CD8-positive, alpha-beta memory T cell (primary cell): ENCODE measurements at regions of chr1 and their contacts with region 1.

Region 1: DNA sequence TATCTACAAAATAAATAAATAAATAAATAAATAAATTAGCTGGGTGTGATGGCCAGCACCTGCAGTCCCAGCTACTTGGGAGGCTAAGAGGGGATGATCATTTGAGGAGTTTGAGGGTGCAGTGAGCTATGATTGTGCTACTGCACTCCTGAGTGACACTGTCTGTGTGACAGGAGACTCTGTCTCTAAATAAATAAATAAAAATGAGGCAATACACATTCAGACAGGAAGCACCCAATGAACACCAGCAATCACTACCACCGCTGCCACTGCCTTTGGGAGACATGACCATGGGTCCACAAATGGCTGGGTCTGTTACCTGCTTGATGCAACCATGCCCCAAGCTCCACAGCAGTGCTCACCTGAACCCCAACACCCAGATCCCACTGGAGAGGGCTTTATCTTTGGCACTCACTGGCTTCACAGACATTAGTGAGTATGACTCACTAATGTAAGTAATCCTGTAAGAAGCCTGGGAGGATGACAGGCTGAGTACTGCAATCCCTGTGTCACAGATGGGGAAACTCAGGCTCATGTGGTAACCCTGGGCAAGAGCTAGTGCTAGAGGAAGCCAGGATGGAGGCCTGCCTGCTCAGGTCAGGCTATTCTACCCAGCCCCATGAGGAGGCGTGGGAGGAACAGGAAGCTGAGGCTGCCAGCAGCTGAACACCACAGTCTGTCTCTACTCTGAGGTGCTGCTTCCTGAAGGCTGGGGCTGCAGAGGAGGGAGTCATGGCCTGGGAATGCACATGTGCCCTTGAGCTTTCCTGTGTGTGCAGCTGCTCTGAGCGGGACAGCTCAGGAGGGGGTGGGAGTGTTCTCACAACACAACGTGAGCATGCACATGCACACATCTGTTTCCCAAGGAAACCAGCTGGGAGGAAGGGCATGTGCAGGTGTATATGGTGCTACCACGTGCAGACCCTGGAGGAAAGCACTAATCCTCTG is 43.0 kb downstream of the SLC9A1 start:
- DNase-seq: peak; percentile 46 to 80 (median 59)
- H3K4me3 ChIP-seq: peak overlapping the region; percentile 39
- H3K4me3 Mint-ChIP-seq: peak overlapping the region in 5 of 7 donors; percentile 49 to 76 (median 62)
- H3K27ac ChIP-seq: peak overlapping the region; percentile 35
- H3K27ac Mint-ChIP-seq: peak overlapping the region; percentile 55 to 95 (median 88)
- H3K4me1 ChIP-seq: peaks cover 44% of the 10 kb centered on the region
- H3K4me1 Mint-ChIP-seq: peaks cover 40 to 66% (median 56%) of the 10 kb centered on the region in 3 donors
- H3K27me3 ChIP-seq: no peaks in the 10 kb centered on the region
- H3K27me3 Mint-ChIP-seq: no peaks in the 10 kb centered on the region

Region 2: GRCh38 chr1:27044613-27045151 is 67.2 kb before region 1 on chr1:
- CTCF ChIA-PET with region 1: interaction called, 26 read pairs
- POLR2A ChIA-PET with region 1: no interaction called
- DNase-seq: peak; percentile 72 to 88 (median 84)
- H3K4me3 ChIP-seq: peak overlapping the region; percentile 41
- H3K4me3 Mint-ChIP-seq: peak overlapping the region in 6 of 7 donors; percentile 23 to 75 (median 60)
- H3K27ac ChIP-seq: no peak overlapping the region
- H3K27ac Mint-ChIP-seq: peak overlapping the region in 3 of 8 donors; percentile 5 to 60 (median 13)
- H3K4me1 ChIP-seq: peaks cover 13% of the 10 kb centered on the region
- H3K4me1 Mint-ChIP-seq: peaks cover 17 to 20% (median 19%) of the 10 kb centered on the region in 3 donors
- H3K27me3 ChIP-seq: no peaks in the 10 kb centered on the region
- H3K27me3 Mint-ChIP-seq: peaks cover 2 to 4% of the 10 kb centered on the region in 2 donors

Region 3: DNA sequence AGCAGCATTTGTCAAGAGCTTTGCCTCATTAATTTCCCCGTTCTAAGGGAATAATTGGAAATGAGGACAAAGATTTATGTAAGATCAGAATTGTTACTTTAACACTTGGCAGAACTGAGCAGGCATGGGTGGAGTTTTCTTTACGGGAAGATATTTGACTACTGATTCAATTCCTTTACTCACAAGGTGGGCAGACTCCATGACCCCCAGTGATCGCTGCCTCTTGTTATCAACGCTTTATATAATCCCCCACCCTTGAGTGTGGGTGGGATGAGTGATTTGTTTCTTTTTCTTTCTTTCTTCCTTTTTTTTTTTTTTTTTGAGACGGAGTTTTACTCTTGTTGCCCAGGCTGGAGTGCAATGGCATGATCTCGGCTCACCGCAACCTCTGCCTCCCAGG is 33.9 kb before region 1 on chr1:
- CTCF ChIA-PET with region 1: no interaction called
- POLR2A ChIA-PET with region 1: no interaction called
- DNase-seq: no peak
- H3K4me3 ChIP-seq: no peak overlapping the region
- H3K4me3 Mint-ChIP-seq: no peak overlapping the region
- H3K27ac ChIP-seq: no peak overlapping the region
- H3K27ac Mint-ChIP-seq: no peak overlapping the region
- H3K4me1 ChIP-seq: no peaks in the 10 kb centered on the region
- H3K4me1 Mint-ChIP-seq: no peaks in the 10 kb centered on the region
- H3K27me3 ChIP-seq: no peaks in the 10 kb centered on the region
- H3K27me3 Mint-ChIP-seq: peaks cover 1 to 3% of the 10 kb centered on the region in 2 donors

Region 4: DNA sequence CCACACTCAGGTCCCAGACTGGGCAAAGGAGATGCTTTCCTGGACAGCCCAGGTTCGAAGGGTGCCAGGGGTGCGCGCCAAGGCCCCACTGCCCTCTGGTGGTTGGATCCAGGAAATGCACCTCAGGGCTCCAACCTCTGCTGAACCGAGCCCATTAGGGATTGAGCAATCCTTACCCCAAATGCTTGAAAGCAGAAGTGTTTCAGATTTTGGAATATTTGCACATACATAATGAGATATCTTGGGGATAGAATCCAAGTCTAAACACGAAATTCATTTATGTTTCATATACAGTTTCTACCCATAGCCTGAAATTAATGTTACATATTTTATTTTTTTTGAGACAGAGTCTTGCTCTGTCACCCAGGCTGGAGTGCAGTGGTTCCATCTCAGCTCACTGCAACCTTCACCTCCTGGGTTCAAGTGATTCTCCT is 14.4 kb before region 1 on chr1:
- CTCF ChIA-PET with region 1: interaction called, 21 read pairs
- POLR2A ChIA-PET with region 1: no interaction called
- DNase-seq: peak; percentile 57 to 78 (median 64)
- H3K4me3 ChIP-seq: no peak overlapping the region
- H3K4me3 Mint-ChIP-seq: no peak overlapping the region
- H3K27ac ChIP-seq: no peak overlapping the region
- H3K27ac Mint-ChIP-seq: peak overlapping the region in 1 of 8 donors; percentile 19
- H3K4me1 ChIP-seq: peaks cover under 1% of the 10 kb centered on the region
- H3K4me1 Mint-ChIP-seq: peaks cover 0 to under 1% (median 0%) of the 10 kb centered on the region in 3 donors
- H3K27me3 ChIP-seq: no peaks in the 10 kb centered on the region
- H3K27me3 Mint-ChIP-seq: no peaks in the 10 kb centered on the region

Region 5: GRCh38 chr1:27136998-27137542 is 25.2 kb after region 1 on chr1:
- CTCF ChIA-PET with region 1: interaction called, 18 read pairs
- POLR2A ChIA-PET with region 1: interaction called, 8 read pairs
- DNase-seq: peak; percentile 54 to 88 (median 70)
- H3K4me3 ChIP-seq: peak overlapping the region; percentile 56
- H3K4me3 Mint-ChIP-seq: peak overlapping the region; percentile 65 to 95 (median 90)
- H3K27ac ChIP-seq: peak overlapping the region; percentile 82
- H3K27ac Mint-ChIP-seq: peak overlapping the region; percentile 98 to 100 (median 100)
- H3K4me1 ChIP-seq: peaks cover 41% of the 10 kb centered on the region
- H3K4me1 Mint-ChIP-seq: peaks cover 40 to 44% (median 43%) of the 10 kb centered on the region in 3 donors
- H3K27me3 ChIP-seq: no peaks in the 10 kb centered on the region
- H3K27me3 Mint-ChIP-seq: no peaks in the 10 kb centered on the region

Region 6: GRCh38 chr1:27154991-27155781 is 43.3 kb after region 1 on chr1 and contains the start of gene SLC9A1:
- CTCF ChIA-PET with region 1: interaction called, 38 read pairs
- POLR2A ChIA-PET with region 1: interaction called, 18 read pairs
- DNase-seq: peak; percentile 89 to 95 (median 91)
- H3K4me3 ChIP-seq: peak within 1 kb of the TSS; percentile 64
- H3K4me3 Mint-ChIP-seq: peak within 1 kb of the TSS; percentile 85 to 95 (median 89)
- H3K27ac ChIP-seq: peak within 1 kb of the TSS; percentile 97
- H3K27ac Mint-ChIP-seq: peak within 1 kb of the TSS; percentile 96 to 100 (median 99)
- H3K4me1 ChIP-seq: peaks cover 34% of the 10 kb centered on the region
- H3K4me1 Mint-ChIP-seq: peaks cover 44 to 52% (median 46%) of the 10 kb centered on the region in 3 donors
- H3K27me3 ChIP-seq: no peaks in the 10 kb centered on the region
- H3K27me3 Mint-ChIP-seq: peaks cover 0 to 3% of the 10 kb centered on the region in 2 donors
- total RNA-seq, gene SLC9A1: 23.9 to 24.8 TPM

Region 7: GRCh38 chr1:27192039-27192529 is 80.2 kb after region 1 on chr1:
- CTCF ChIA-PET with region 1: interaction called, 16 read pairs
- POLR2A ChIA-PET with region 1: no interaction called
- DNase-seq: no peak
- H3K4me3 ChIP-seq: no peak overlapping the region
- H3K4me3 Mint-ChIP-seq: no peak overlapping the region
- H3K27ac ChIP-seq: no peak overlapping the region
- H3K27ac Mint-ChIP-seq: no peak overlapping the region
- H3K4me1 ChIP-seq: no peaks in the 10 kb centered on the region
- H3K4me1 Mint-ChIP-seq: no peaks in the 10 kb centered on the region
- H3K27me3 ChIP-seq: no peaks in the 10 kb centered on the region
- H3K27me3 Mint-ChIP-seq: peaks cover 3 to 4% of the 10 kb centered on the region in 2 donors

Region 8: DNA sequence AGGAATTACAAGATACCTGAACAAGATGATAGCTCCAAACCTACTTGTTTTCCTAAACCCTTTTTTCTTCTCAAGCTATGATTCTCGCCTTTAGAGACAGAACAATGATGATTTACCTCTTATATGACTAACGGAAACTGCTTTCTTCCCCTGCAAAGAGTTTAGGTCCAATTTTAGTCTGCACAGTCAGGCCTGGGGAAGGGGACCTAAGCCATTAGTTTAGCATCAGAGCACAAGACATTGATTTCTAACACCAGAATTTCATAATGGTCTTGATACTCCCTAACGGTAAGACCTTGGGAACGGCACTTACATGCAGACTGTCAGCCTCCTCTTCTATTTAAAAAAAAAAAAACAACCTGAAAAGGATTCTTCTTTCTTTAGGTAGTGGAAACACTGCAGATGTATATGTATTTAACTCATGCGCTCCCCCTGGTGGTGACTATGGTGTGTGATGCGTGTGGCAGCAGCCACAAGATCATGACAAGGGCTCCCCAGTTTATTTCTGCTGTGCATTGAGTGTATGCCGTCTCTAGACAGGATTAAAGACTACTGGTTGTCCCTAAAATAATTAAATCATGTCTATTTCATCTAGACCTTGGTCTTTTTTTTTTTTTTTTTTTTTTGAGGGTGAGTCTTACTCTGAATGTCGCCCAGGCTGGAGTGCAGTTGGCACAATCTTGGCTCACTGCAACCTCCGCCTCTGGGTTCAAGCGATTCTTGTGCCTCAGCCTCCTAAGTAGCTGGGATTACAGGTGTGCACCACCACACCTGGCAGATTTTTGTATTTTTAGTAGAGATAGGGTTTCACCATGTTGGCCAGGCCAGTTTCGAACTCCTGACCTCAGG is 172.7 kb after region 1 on chr1:
- CTCF ChIA-PET with region 1: interaction called, 19 read pairs
- POLR2A ChIA-PET with region 1: interaction called, 6 read pairs
- DNase-seq: peak; percentile 66 to 89 (median 77)
- H3K4me3 ChIP-seq: no peak overlapping the region
- H3K4me3 Mint-ChIP-seq: no peak overlapping the region
- H3K27ac ChIP-seq: no peak overlapping the region
- H3K27ac Mint-ChIP-seq: peak overlapping the region in 2 of 8 donors; percentile 20 to 34
- H3K4me1 ChIP-seq: no peaks in the 10 kb centered on the region
- H3K4me1 Mint-ChIP-seq: peaks cover 0 to 4% (median 0%) of the 10 kb centered on the region in 3 donors
- H3K27me3 ChIP-seq: no peaks in the 10 kb centered on the region
- H3K27me3 Mint-ChIP-seq: no peaks in the 10 kb centered on the region

Region 9: DNA sequence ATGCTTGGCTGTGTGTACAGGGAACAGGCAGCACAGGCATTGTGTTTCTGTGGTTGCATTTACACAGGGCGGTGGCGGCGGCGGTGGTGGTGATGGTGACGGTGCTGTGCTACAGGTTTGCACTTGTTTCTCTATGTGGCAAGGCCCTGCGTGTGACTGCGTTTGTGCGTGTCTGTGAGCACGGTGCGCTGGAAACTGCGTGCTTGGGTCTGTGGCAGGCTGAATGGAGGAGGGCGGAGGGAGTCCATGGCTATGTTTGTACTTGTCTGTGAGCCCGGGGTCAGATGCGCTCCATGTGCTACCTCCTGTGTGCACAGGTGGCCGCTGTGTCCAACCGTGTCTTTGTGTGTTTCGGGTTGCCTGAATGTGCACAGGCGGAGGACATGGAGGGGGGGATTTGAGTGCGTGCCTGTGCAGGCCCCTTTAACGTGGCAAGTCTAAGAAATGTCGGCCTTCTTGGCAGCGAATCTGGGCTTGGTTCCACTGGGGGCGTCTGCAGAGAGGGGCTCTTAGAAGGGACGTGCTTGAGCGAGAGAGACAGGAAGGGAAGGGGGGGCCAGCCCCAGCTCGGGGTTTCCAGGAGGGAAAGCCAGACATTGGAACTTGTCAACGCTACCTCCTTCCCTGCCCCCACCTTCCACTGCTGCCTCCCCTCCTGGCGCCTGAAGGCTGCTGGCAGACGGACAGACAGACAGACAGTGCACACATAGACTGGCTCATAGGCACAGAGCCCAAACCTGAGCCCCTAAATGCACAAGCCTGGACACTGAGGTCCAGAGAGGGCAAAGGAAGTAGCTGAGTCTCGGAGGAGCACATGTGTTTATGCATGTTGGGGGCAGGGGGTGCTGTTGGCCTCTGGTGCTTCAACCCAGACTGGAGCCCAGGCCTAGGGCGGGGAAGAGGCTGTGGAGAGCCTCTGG is 410.8 kb after region 1 on chr1:
- CTCF ChIA-PET with region 1: no interaction called
- POLR2A ChIA-PET with region 1: no interaction called
- DNase-seq: peak; percentile 21 to 86 (median 73)
- H3K4me3 ChIP-seq: peak overlapping the region; percentile 72
- H3K4me3 Mint-ChIP-seq: peak overlapping the region; percentile 86 to 96 (median 94)
- H3K27ac ChIP-seq: peak overlapping the region; percentile 47
- H3K27ac Mint-ChIP-seq: peak overlapping the region; percentile 94 to 99 (median 96)
- H3K4me1 ChIP-seq: peaks cover 83% of the 10 kb centered on the region
- H3K4me1 Mint-ChIP-seq: peaks cover 58 to 75% (median 71%) of the 10 kb centered on the region in 3 donors
- H3K27me3 ChIP-seq: no peaks in the 10 kb centered on the region
- H3K27me3 Mint-ChIP-seq: no peaks in the 10 kb centered on the region